K562 (cell line): ENCODE measurements at regions of chr19 and their contacts with region 1.

Region 1: GRCh38 chr19:7618771-7619514 is 10.4 kb downstream of the XAB2 start:
- DNase-seq: no peak
- ATAC-seq: peak; percentile 10
- H3K4me3 ChIP-seq: no peak overlapping the region
- H3K27ac ChIP-seq: no peak overlapping the region
- H3K4me1 ChIP-seq: peaks cover 2 to 64% of the 10 kb centered on the region in 2 experiments; a peak in 4 of 5 replicates
- H3K27me3 ChIP-seq: peaks cover 0 to 6% of the 10 kb centered on the region in 2 experiments; a peak in 1 of 5 replicates
- CTCF ChIP-seq: no peak
- EP300 ChIP-seq: no peak
- POLR2A ChIP-seq: no peak
- RAD21 ChIP-seq: no peak

Region 2: GRCh38 chr19:7629347-7630054 is 10.6 kb after region 1 on chr19 and contains the starts of genes PET100 and XAB2:
- CTCF ChIA-PET with region 1: no interaction called
- POLR2A ChIA-PET with region 1: interaction called, 22 read pairs
- in situ Hi-C with region 1: no loop called
- intact Hi-C with region 1: no loop called
- DNase-seq: peak; percentile 96 to 100 (median 97)
- ATAC-seq: peak; percentile 99
- H3K4me3 ChIP-seq: peak within 1 kb of the TSS; percentile 89
- H3K27ac ChIP-seq: peak within 1 kb of the TSS; percentile 91
- H3K4me1 ChIP-seq: peaks cover 8 to 32% of the 10 kb centered on the region in 2 experiments; a peak in 4 of 5 replicates
- H3K27me3 ChIP-seq: no peaks in the 10 kb centered on the region
- CTCF ChIP-seq: no peak
- EP300 ChIP-seq: no peak
- POLR2A ChIP-seq: peak; percentile 84
- RAD21 ChIP-seq: no peak
- polyA plus RNA-seq, gene PET100: 322 to 351 TPM
- polyA plus RNA-seq, gene XAB2: 0.21 to 0.71 TPM

Region 3: DNA sequence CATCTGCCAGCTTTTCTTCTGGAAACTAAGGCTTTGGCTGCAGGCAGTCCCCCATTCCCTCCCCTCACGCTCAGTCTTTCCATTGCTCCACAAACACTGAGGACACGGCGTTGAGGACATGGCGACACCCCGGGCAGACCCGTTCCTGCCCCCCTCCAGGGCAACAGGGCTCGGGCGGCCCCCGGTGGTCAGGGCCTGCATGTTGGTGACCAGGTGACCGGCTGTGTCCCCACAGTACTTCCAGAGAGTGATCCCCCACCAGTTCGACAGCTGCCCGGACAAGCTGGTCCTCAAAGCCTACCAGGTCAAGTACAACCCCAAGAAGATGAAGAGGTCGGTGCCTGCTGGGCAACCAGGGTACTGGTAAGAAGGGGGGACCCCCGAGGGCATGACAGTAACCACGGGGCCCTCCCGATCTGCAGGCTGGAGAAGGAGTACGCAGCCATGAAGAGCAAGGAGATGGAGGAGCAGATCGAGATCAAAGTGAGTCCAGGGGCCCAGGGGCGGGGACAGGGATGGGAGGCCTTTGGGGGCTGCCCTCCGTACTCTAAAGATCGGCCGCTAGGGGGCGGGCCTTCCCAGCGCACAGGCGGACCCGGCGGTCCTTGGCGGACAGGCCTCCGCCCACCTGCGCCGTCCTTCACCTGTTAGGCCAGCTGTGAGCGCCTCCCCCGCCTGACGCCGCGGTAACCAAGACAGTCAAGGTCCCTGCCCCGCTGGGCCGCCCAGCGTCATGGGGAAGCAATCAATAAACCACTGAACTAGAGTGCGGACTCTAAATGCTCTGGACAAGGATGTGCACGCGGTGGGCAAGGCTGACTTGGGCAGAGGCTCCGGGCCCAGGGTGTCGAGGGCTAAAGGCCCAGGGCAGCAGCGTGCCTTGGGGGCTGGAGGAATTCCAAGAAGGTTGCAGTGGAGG is 234.2 kb after region 1 on chr19:
- CTCF ChIA-PET with region 1: no interaction called
- POLR2A ChIA-PET with region 1: no interaction called
- in situ Hi-C with region 1: no loop called
- intact Hi-C with region 1: no loop called
- DNase-seq: peak; percentile 91 to 97 (median 94)
- ATAC-seq: peak; percentile 92
- H3K4me3 ChIP-seq: no peak overlapping the region
- H3K27ac ChIP-seq: no peak overlapping the region
- H3K4me1 ChIP-seq: peaks cover 13 to 74% of the 10 kb centered on the region in 2 experiments
- H3K27me3 ChIP-seq: peaks cover 15 to 37% of the 10 kb centered on the region in 2 experiments; a peak in 4 of 5 replicates
- CTCF ChIP-seq: peak; percentile 83 to 90 (median 86); a peak in 5 of 6 replicates
- EP300 ChIP-seq: no peak
- POLR2A ChIP-seq: no peak
- RAD21 ChIP-seq: peak; percentile 68 to 85

Region 4: DNA sequence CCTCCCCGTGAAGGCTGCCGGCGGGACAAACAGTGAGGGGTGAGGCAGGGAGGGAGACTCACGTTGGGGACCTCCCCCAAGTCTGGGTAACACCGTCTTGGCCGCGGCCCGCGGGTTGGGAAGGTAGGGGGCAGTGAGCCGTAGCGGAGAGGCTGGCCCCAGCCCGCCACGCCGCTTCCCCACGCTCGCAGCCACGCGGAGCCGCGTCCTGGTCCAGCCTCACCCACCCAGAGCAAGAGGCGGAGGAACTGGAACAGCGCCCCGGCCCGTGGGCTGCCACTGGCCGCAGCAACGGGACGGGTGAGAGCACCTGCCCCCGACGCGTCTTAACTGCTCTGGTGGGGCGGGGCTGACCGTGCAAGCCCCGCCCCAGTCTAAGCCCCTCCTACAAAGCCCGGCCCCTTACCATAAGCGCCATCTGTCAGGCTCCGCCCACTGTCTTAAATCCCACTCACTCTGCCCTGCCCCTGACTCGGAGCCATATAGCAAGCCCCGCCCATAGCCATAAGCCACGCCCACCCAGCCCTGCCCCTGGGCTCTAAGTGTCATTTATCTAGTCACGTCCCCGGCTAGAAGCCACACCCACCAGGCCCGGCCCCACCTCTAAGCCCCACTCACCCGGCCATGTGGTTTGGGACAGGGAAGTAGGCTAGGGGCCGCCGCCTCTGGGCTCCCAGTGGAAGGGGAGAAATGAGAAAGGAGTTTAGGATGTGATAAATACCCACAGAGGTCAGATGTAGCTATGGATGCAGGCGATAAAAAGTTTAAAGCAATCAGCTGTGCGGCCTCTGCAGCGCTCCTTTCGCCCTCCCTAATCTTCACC is 431.5 kb after region 1 on chr19:
- CTCF ChIA-PET with region 1: no interaction called
- POLR2A ChIA-PET with region 1: no interaction called
- in situ Hi-C with region 1: no loop called
- intact Hi-C with region 1: no loop called
- DNase-seq: peak; percentile 97 to 100 (median 98)
- ATAC-seq: peak; percentile 98
- H3K4me3 ChIP-seq: peak overlapping the region; percentile 56
- H3K27ac ChIP-seq: peak overlapping the region; percentile 91
- H3K4me1 ChIP-seq: peaks cover 18 to 43% of the 10 kb centered on the region in 2 experiments
- H3K27me3 ChIP-seq: no peaks in the 10 kb centered on the region
- CTCF ChIP-seq: 0 out of 6 replicates have a peak, but pooled peaks of 1 of the 3 experiments have one; percentile 1
- EP300 ChIP-seq: no peak
- POLR2A ChIP-seq: peak; percentile 86
- RAD21 ChIP-seq: peak in 1 of 2 experiments; percentile 14; a peak in 1 of 4 replicates